Activated CD8-positive, alpha-beta T cell treated with anti-CD3 and anti-CD28 coated beads, Interleukin-2, amount 10 ng/mL, durations not matched to agents 7 days and 5 days (primary cell): ENCODE measurements at regions of chr11 and their contacts with region 1.

Region 1: GRCh38 chr11:128757235-128757711 is 63.4 kb downstream of the FLI1 start:
- DNase-seq: peak; percentile 84
- ATAC-seq: peak; percentile 91
- H3K4me3 Mint-ChIP-seq: no peak overlapping the region
- H3K27ac Mint-ChIP-seq: peak overlapping the region; percentile 87
- H3K4me1 Mint-ChIP-seq: peaks cover 76% of the 10 kb centered on the region
- H3K27me3 Mint-ChIP-seq: no peaks in the 10 kb centered on the region

Region 2: DNA sequence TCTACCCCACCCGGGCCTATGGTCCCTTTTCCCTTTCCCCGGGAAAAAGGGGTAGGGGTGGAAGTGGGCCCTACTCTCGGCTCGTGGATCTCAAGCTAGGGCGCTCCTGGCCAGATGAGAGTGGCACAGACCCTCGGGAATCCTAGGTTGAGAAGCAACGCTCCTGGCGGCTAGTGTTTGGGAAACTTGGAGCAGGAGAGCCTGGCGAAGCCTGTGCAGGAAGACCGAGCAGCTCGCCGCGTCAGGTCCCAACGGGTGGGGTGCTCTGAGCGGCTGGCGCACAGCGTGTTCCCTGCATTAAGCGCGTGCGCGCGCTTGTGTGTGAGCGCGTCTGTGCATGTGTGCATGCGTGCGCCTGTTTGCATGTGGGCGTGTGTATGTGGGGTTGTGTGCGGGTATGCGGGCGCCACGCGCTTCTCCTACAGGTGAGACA is 70.5 kb before region 1 on chr11:
- CTCF ChIA-PET with region 1: interaction called, 10 read pairs
- POLR2A ChIA-PET with region 1: no interaction called
- DNase-seq: peak; percentile 64
- ATAC-seq: peak; percentile 80
- H3K4me3 Mint-ChIP-seq: peak overlapping the region; percentile 72
- H3K27ac Mint-ChIP-seq: peak overlapping the region; percentile 31
- H3K4me1 Mint-ChIP-seq: peaks cover 48% of the 10 kb centered on the region
- H3K27me3 Mint-ChIP-seq: peaks cover 68% of the 10 kb centered on the region

Region 3: DNA sequence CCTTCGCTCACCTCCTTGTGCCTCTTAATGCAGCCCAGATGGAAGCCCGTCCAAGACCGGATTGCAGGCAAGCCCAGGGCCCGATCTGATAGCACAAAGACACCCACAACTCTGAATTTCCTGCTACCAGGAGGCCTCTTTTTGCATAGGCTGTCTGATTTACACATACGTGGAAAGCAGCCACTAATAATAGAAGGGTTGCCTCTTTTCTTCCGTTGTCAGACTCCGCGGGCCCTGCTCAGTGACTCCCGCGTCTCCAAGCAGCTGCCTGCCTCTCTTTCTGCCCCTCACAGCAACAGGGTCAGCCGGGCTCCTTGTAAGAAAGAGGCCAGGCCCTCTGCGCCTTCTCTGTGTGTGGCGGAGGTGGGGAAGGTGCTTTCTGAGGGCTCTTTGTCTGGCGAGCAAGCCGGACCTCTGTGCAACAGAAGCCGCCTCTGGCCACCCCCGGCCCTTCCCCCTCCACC is 36.7 kb before region 1 on chr11:
- CTCF ChIA-PET with region 1: interaction called, 20 read pairs
- POLR2A ChIA-PET with region 1: no interaction called
- DNase-seq: peak; percentile 65
- ATAC-seq: peak; percentile 44
- H3K4me3 Mint-ChIP-seq: peak overlapping the region; percentile 72
- H3K27ac Mint-ChIP-seq: peak overlapping the region; percentile 92
- H3K4me1 Mint-ChIP-seq: peaks cover 99% of the 10 kb centered on the region
- H3K27me3 Mint-ChIP-seq: no peaks in the 10 kb centered on the region

Region 4: GRCh38 chr11:128733440-128734102 is 23.7 kb before region 1 on chr11:
- CTCF ChIA-PET with region 1: interaction called, 35 read pairs
- POLR2A ChIA-PET with region 1: interaction called, 5 read pairs
- DNase-seq: peak; percentile 51
- ATAC-seq: peak; percentile 53
- H3K4me3 Mint-ChIP-seq: peak overlapping the region; percentile 61
- H3K27ac Mint-ChIP-seq: peak overlapping the region; percentile 78
- H3K4me1 Mint-ChIP-seq: peaks cover 98% of the 10 kb centered on the region
- H3K27me3 Mint-ChIP-seq: no peaks in the 10 kb centered on the region